Right ventricle myocardium inferior (tissue), 1 donor: ENCODE measurements at regions of chr5 and their contacts with region 1.

Region 1: DNA sequence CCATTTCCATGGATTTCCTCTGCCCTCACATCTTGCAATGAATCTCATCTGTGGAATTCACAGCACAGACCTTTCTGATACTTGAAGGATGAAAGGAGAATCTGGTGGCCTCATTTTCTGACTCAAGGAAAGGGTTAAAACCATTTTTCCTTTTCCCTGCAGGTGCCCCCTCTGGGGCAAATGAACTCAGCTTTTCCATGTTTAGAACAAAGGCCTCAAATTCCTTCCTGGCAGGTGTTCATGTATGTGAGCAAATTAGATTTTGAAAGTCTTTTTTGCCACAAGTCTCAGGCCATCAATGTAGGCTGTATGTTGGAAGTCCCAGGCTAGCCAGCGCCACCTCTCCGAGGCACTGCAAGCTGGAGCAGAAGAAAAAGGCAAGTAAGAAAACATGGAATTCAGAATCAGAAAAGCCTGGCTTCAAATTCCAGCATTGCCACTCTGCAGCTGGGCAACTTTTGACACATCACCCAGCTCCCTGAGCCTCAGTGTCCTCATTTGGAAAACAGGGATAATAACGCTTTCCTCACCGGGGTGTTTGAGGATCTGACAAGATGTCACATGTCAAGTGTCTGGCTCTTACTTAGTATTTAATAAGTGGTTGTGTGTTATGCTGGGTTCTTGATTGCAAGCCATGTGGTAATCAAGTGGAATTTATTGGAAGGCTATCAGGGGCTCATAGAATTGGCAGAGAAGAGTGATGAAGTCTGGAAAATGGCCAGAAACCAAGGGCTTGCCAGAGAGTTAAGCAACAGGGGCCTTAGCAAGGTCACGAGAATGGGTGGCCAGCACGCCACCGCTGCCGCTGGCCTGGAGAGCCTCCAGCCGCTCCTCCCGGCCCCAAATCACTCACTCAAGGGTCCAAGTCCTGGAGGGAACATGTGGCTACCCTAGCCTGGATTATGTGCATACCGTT is 48.4 kb upstream of the SMIM23 start:
- DNase-seq: no peak
- ATAC-seq: peak; percentile 88

Region 2: GRCh38 chr5:171580502-171581265 is 156.6 kb before region 1 on chr5:
- intact Hi-C with region 1: loop called (anchors 2 kb)
- DNase-seq: no peak
- ATAC-seq: peak; percentile 35

Region 3: DNA sequence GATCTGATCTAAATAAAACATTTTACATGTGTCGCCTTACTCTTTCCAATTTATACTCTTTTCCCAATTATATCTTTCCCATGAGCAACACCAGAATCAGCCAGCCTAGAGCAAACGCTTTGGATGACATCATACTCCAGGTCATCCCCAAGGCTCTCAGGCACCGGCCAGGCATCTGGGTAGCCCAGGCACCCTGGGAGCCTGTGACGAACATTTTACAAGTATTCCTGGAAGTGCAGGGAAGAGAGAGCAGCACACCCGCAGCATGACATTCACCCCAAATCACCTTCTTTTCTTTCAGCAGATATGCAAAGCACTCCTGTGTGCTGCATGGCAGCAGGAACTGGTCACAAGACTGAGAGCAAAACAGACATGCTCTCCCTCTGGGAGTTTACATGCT is 27.3 kb before region 1 on chr5:
- intact Hi-C with region 1: loop called (anchors 2 kb)
- DNase-seq: no peak
- ATAC-seq: peak; percentile 90

Region 4: DNA sequence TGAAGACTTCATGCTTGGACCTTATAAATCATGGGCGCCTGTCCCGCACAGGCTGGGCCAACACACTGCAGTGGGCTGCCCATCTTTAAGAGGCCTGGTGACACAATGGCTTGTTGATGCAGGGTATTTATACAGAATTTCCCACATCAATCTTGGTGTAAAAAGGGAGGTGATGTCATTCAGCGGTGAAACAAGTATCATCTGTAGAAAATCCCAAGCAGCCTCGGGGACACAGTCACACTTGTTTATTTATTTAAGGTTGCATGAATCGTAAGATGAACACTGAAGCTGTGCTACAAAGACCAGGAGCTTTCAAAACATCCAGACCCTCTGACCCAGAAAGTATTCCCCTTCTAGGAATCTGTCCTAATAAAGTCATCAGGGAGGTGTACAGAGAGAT is 88.9 kb after region 1 on chr5:
- intact Hi-C with region 1: no loop called
- DNase-seq: no peak
- ATAC-seq: no peak